Endothelial cell of umbilical vein (primary cell): ENCODE measurements at regions of chr12 and their contacts with region 1.

Region 1: GRCh38 chr12:12334367-12335040 is 15.5 kb downstream of the MANSC1 start:
- DNase-seq: peak; percentile 67
- H3K4me3 ChIP-seq: no peak overlapping the region
- H3K27ac ChIP-seq: no peak overlapping the region
- H3K4me1 ChIP-seq: peaks cover 44% of the 10 kb centered on the region
- H3K27me3 ChIP-seq: no peaks in the 10 kb centered on the region
- CTCF ChIP-seq: peak; percentile 76 to 83
- POLR2A ChIP-seq: peak; percentile 40

Region 2: GRCh38 chr12:11553871-11554533 is 780.5 kb before region 1 on chr12:
- CTCF ChIA-PET with region 1: no interaction called
- POLR2A ChIA-PET with region 1: no interaction called
- dilution Hi-C with region 1: no loop called
- intact Hi-C with region 1: loop called (anchors 5 kb)
- DNase-seq: peak; percentile 61
- H3K4me3 ChIP-seq: no peak overlapping the region
- H3K27ac ChIP-seq: no peak overlapping the region
- H3K4me1 ChIP-seq: no peaks in the 10 kb centered on the region
- H3K27me3 ChIP-seq: peaks cover 27 to 34% of the 10 kb centered on the region in 2 experiments
- CTCF ChIP-seq: peak; percentile 43 to 49
- POLR2A ChIP-seq: no peak

Region 3: DNA sequence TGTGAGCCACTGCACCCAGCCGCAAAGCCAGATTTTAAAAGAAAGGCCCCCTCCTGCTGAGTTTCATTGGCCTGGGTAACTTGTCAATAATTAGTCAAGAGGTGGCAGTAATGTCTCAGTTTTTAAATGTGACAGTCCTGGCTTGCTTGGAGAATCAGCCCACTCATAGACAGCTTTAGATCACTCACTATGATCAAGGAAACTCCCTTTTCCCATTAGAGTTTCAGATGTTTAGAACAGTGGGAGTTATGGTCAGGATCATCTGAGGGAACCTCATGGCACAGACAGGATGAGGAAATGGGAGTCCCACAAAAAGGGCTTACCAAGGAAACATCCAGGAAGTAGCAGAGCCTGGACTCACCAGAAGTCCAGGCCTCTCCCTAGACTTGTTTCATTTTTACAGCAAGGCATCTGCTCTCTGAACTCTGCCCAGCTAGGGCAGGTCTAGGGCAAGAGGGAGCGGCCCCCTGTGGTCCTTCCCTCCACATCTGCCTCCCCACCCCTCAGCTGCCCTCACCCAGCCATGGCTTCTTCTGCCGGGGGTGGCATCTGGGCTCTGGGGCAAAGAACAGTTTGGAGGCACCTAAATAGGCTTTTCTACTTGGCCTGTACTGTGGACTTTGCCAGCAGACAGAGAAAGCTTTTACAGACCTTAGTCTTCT is 252.5 kb before region 1 on chr12:
- CTCF ChIA-PET with region 1: interaction called, 155 read pairs
- POLR2A ChIA-PET with region 1: no interaction called
- dilution Hi-C with region 1: loop called (anchors 25 kb)
- intact Hi-C with region 1: loop called (anchors 1 kb)
- DNase-seq: peak; percentile 79
- H3K4me3 ChIP-seq: no peak overlapping the region
- H3K27ac ChIP-seq: peak overlapping the region; percentile 40
- H3K4me1 ChIP-seq: peaks cover 5% of the 10 kb centered on the region
- H3K27me3 ChIP-seq: no peaks in the 10 kb centered on the region
- CTCF ChIP-seq: peak; percentile 17 to 29
- POLR2A ChIP-seq: no peak

Region 4: GRCh38 chr12:12349711-12350665 is 15.5 kb after region 1 on chr12 and contains the start of gene MANSC1:
- CTCF ChIA-PET with region 1: interaction called, 26 read pairs
- POLR2A ChIA-PET with region 1: interaction called, 6 read pairs
- dilution Hi-C with region 1: no loop called
- intact Hi-C with region 1: no loop called
- DNase-seq: peak; percentile 64
- H3K4me3 ChIP-seq: peak within 1 kb of the TSS; percentile 42 to 76 (median 46)
- H3K27ac ChIP-seq: no peak within 1 kb of the TSS
- H3K4me1 ChIP-seq: peaks cover 7% of the 10 kb centered on the region
- H3K27me3 ChIP-seq: no peaks in the 10 kb centered on the region
- CTCF ChIP-seq: peak; percentile 34 to 52
- POLR2A ChIP-seq: no peak
- total RNA-seq, gene MANSC1: 56.5 and 65.0 TPM in 2 replicates

Region 5: DNA sequence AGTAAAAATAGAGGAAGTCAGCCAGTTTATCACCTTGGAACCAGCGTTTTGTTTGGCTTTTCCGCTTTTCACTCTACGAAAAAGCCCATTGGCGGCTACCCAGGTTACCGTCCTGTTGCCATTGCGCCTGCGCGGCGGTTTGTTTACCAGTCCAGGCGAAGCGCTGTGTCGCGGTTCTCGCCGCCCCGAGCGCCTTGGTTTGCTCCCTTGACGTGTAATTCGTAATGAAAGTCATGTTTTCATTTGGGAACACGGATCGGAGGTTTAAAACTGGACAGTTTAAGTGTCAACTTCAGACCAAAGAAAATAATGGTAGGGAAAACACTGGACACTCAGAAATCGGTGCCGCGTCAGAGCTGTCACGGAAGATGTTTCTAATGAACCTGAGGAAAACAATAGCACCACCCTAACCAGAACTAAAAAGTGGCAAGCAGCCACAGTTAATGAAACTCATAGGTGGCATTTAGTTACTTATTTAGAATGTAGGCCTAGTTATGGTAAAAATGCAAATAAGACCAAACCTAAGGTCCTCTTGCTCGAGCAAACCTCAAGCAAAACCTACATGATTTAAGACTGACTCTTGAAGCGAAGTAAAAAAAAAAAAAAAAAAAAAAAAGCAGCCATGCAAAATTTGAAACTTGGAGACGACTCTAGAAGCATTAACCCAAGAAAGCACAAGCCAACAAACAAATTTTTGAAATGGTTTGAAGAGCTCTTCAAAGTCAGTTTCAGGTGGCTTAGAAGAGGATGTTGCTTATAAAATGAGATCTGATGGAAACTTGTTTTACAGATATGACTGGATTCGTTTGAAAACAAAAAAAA is 362.3 kb after region 1 on chr12:
- CTCF ChIA-PET with region 1: no interaction called
- POLR2A ChIA-PET with region 1: no interaction called
- dilution Hi-C with region 1: no loop called
- intact Hi-C with region 1: loop called (anchors 5 kb)
- DNase-seq: peak; percentile 92
- H3K4me3 ChIP-seq: peak overlapping the region; percentile 45 to 98 (median 88)
- H3K27ac ChIP-seq: peak overlapping the region; percentile 98
- H3K4me1 ChIP-seq: peaks cover 9% of the 10 kb centered on the region
- H3K27me3 ChIP-seq: no peaks in the 10 kb centered on the region
- CTCF ChIP-seq: no peak
- POLR2A ChIP-seq: peak; percentile 61